B cell (primary cell): ENCODE measurements at regions of chr17 and their contacts with region 1.

Region 1: GRCh38 chr17:44878627-44879221 is 20.5 kb downstream of the EFTUD2 start:
- DNase-seq: peak; percentile 45
- ATAC-seq: no peak
- H3K4me3 ChIP-seq: no peak overlapping the region
- H3K4me3 Mint-ChIP-seq: no peak overlapping the region
- H3K27ac ChIP-seq: no peak overlapping the region
- H3K27ac Mint-ChIP-seq: no peak overlapping the region
- H3K4me1 ChIP-seq: no peaks in the 10 kb centered on the region
- H3K4me1 Mint-ChIP-seq: no peaks in the 10 kb centered on the region
- H3K27me3 ChIP-seq: no peaks in the 10 kb centered on the region
- H3K27me3 Mint-ChIP-seq: no peaks in the 10 kb centered on the region
- CTCF ChIP-seq: peak; percentile 64

Region 2: GRCh38 chr17:44842748-44843147 is 36.0 kb before region 1 on chr17:
- CTCF ChIA-PET with region 1: no interaction called
- POLR2A ChIA-PET with region 1: no interaction called
- intact Hi-C with region 1: no loop called
- DNase-seq: no peak
- ATAC-seq: no peak
- H3K4me3 ChIP-seq: no peak overlapping the region
- H3K4me3 Mint-ChIP-seq: no peak overlapping the region
- H3K27ac ChIP-seq: no peak overlapping the region
- H3K27ac Mint-ChIP-seq: no peak overlapping the region
- H3K4me1 ChIP-seq: no peaks in the 10 kb centered on the region
- H3K4me1 Mint-ChIP-seq: no peaks in the 10 kb centered on the region
- H3K27me3 ChIP-seq: no peaks in the 10 kb centered on the region
- H3K27me3 Mint-ChIP-seq: no peaks in the 10 kb centered on the region
- CTCF ChIP-seq: no peak

Region 3: DNA sequence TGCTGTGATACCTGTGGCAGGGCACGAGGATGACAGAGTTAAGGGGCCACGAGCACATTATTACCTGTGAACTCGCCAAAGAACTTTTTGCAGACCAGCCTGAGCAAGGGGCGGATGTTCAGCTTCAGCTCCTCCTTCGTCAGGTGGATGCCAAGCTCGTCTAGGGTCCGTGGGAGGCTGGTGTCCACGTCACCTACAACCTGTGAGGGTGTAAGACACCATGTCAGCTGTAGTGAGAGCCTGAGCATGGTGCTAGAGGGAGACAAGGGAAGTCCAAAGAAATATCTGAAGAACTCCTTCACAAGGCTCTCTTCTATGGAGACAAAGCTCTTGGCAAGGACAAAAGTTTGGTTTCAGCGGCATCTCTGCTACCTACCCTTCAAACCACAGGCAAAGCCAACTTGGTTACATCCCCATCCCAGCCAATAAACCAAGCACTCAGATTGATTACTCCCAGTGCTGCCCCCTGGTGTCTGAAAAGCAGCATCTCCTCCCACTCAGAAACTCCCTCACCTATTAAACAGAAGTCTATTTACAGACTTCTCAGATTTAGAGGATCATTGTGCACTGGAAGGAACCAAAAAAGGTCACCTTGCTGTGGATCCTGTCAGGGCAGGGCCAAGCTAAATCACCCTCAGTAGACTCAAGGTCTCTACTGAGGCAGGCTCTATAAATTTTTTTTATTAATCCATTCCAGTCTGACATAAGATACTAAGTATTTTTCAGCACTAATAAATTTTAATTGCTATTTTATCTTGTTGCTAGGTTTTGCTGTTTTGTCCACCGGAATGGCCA is 13.7 kb before region 1 on chr17:
- CTCF ChIA-PET with region 1: interaction called, 11 read pairs
- POLR2A ChIA-PET with region 1: no interaction called
- intact Hi-C with region 1: no loop called
- DNase-seq: peak; percentile 80
- ATAC-seq: peak; percentile 60
- H3K4me3 ChIP-seq: no peak overlapping the region
- H3K4me3 Mint-ChIP-seq: no peak overlapping the region
- H3K27ac ChIP-seq: no peak overlapping the region
- H3K27ac Mint-ChIP-seq: no peak overlapping the region
- H3K4me1 ChIP-seq: no peaks in the 10 kb centered on the region
- H3K4me1 Mint-ChIP-seq: no peaks in the 10 kb centered on the region
- H3K27me3 ChIP-seq: no peaks in the 10 kb centered on the region
- H3K27me3 Mint-ChIP-seq: no peaks in the 10 kb centered on the region
- CTCF ChIP-seq: peak; percentile 95